ENCODE measurements at regions of chr14 and their contacts with region 1.

Region 1: DNA sequence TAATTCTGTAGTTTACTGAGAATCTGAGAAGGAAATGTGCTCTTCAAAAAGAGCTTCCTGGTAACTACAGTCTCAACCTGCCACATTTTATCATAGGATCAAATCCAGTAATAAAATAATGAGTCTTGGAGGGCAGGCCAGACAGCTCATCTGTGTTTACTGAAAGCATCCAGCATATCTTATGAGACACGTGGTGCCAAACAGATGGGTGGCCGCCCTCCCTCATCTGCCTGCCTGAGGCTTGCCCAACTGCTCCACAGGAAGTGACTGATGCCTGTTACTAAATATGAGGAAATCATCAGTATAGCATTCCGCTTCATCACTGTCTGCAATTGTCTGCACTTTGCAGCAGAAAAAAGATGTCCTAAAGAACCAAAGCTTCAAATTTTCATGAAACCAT is 13.5 kb downstream of the DHRS7 start:
- DNase-seq: peak; percentile 100
- ATAC-seq: peak; percentile 100
- H3K4me3 ChIP-seq: no peak overlapping the region
- H3K27ac ChIP-seq: peak overlapping the region; percentile 55
- H3K4me1 ChIP-seq: peaks cover 24% of the 10 kb centered on the region
- H3K27me3 ChIP-seq: no peaks in the 10 kb centered on the region
- CTCF ChIP-seq: no peak

Region 2: DNA sequence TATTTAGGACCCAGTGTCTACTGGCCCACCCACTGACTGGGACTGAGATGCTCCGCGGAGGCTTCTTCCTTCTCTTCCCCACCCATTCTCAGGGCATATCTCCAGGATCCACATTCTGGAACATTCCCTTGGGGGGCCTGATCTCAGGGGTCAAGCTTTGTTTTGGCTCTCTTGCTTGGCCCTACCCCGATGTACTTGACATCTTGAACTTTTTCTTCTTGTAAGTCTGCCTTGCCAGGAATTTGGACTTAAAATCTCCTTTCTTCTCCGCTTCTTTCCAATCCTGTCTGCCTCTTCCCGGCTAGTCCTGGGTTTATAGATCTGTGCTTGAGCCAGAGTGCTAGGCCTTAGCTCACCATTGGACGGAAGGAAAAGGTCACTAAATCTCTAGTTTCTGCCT is 1491.9 kb before region 1 on chr14:
- CTCF ChIA-PET with region 1: no interaction called
- POLR2A ChIA-PET with region 1: interaction called, 20 read pairs
- intact Hi-C with region 1: no loop called
- DNase-seq: no peak
- ATAC-seq: no peak
- H3K4me3 ChIP-seq: no peak overlapping the region
- H3K27ac ChIP-seq: no peak overlapping the region
- H3K4me1 ChIP-seq: no peaks in the 10 kb centered on the region
- H3K27me3 ChIP-seq: peaks cover 40% of the 10 kb centered on the region
- CTCF ChIP-seq: no peak

Region 3: DNA sequence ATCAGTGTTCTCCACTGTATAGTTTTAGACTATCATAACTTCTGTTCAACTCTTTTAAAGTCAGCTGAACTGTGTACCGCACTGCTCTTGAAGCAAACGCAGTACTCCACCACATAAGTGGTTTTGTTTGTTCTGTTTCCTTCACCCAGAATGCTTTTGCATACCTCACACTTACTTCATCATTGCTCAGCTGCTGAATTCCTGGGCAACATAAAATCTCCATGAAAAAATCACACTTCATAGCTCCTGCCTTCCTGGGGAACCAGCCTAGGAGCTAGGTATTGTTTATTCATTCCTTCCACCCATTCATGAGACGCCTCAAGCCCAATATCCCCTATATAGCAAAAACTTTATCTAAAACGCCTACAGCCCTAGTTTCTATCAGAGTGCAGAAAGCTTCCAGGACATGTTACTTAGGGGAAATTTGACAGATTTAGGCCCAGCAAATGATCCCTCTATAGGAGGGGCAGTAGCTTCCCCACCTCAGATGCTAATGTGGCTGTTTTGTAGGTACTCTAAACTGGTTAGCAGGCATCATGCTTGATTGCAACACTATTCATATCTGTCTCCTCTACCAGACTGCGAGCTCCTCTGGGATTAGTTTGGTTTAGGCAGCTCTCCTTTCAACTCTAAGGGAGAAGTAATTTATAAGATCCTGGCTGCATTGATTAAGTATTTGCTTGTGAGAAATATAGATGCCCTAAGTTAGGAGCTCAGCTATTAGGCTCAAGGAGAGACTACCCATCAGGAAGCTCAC is 187.3 kb before region 1 on chr14:
- CTCF ChIA-PET with region 1: interaction called, 10 read pairs
- POLR2A ChIA-PET with region 1: no interaction called
- intact Hi-C with region 1: loop called (anchors 2 kb)
- DNase-seq: peak; percentile 70
- ATAC-seq: peak; percentile 66
- H3K4me3 ChIP-seq: no peak overlapping the region
- H3K27ac ChIP-seq: no peak overlapping the region
- H3K4me1 ChIP-seq: peaks cover 18% of the 10 kb centered on the region
- H3K27me3 ChIP-seq: peaks cover 23% of the 10 kb centered on the region
- CTCF ChIP-seq: no peak

Region 4: GRCh38 chr14:60091550-60092530 is 59.9 kb before region 1 on chr14 and contains the start of gene PCNX4:
- CTCF ChIA-PET with region 1: interaction called, 6 read pairs
- POLR2A ChIA-PET with region 1: interaction called, 5 read pairs
- intact Hi-C with region 1: loop called (anchors 1 kb)
- DNase-seq: peak; percentile 100
- ATAC-seq: peak; percentile 93
- H3K4me3 ChIP-seq: peak within 1 kb of the TSS; percentile 76
- H3K27ac ChIP-seq: peak within 1 kb of the TSS; percentile 85
- H3K4me1 ChIP-seq: peaks cover 42% of the 10 kb centered on the region
- H3K27me3 ChIP-seq: no peaks in the 10 kb centered on the region
- CTCF ChIP-seq: no peak
- total RNA-seq, gene PCNX4: 117 and 151 TPM in 2 replicates

Measured in PC-3 (cell line).